Right ventricle myocardium inferior (tissue), 1 donor: ENCODE measurements at regions of chr12 and their contacts with region 1.

Region 1: GRCh38 chr12:127677537-127678131 is 589.3 kb upstream of the TMEM132C start:
- DNase-seq: no peak
- ATAC-seq: no peak

Region 2: GRCh38 chr12:127925971-127926370 is 248.3 kb after region 1 on chr12:
- intact Hi-C with region 1: loop called (anchors 5 kb)
- DNase-seq: no peak
- ATAC-seq: peak; percentile 69